Activated CD4-positive, alpha-beta T cell treated with anti-CD3 and anti-CD28 coated beads for 36 hours (primary cell): ENCODE measurements at regions of chr14 and their contacts with region 1.

Region 1: GRCh38 chr14:23301288-23301968 is 1.2 kb downstream of the PPP1R3E start:
- DNase-seq: peak; percentile 99
- ATAC-seq: peak; percentile 84
- H3K4me3 Mint-ChIP-seq: peak overlapping the region; percentile 100
- H3K27ac Mint-ChIP-seq: peak overlapping the region; percentile 94
- H3K4me1 Mint-ChIP-seq: peaks cover 18% of the 10 kb centered on the region
- H3K27me3 Mint-ChIP-seq: peaks cover 10% of the 10 kb centered on the region

Region 2: DNA sequence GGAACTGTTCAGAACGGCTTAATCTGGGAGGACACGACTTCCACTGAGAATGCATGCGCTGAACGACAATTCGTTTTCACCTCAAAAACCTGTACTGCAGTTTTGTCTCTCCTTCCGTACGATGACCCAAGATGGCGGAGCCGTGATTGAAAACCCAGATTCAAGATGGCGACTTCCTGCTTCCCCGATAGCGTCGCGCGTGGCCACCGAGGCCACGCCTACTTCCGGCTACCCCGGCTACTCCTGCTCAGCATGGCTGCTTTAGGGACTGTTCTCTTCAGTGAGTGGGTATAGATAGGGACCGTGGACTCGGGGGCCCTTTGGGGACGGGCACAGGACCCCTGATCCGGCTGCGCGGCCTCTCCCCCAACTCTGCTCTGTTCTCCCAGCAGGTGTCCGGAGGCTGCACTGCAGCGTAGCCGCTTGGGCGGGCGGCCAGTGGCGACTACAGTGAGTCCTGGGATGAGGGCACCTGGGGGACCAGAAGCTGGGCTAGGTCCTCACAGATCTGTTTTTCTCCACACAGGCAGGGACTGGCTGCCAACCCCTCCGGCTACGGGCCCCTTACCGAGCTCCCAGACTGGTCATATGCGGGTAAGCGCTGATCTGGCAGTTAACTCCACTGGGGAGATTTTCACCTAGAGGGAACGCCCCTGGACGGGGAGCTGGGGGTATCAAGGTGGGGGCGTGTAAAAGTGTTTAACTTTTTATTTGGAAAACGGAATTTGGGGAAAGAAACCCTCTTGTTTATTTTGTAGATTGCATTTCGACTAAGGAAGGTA is 471.6 kb before region 1 on chr14 and contains the start of gene MRPL52:
- CTCF ChIA-PET with region 1: no interaction called
- POLR2A ChIA-PET with region 1: no interaction called
- intact Hi-C with region 1: loop called in 1 of 2 experiments (anchors 5 kb)
- DNase-seq: peak; percentile 94
- ATAC-seq: peak; percentile 92
- H3K4me3 Mint-ChIP-seq: peak within 1 kb of the TSS; percentile 82
- H3K27ac Mint-ChIP-seq: peak within 1 kb of the TSS; percentile 98
- H3K4me1 Mint-ChIP-seq: peaks cover 26% of the 10 kb centered on the region
- H3K27me3 Mint-ChIP-seq: no peaks in the 10 kb centered on the region
- total RNA-seq, gene MRPL52: 115 to 136 TPM

Region 3: DNA sequence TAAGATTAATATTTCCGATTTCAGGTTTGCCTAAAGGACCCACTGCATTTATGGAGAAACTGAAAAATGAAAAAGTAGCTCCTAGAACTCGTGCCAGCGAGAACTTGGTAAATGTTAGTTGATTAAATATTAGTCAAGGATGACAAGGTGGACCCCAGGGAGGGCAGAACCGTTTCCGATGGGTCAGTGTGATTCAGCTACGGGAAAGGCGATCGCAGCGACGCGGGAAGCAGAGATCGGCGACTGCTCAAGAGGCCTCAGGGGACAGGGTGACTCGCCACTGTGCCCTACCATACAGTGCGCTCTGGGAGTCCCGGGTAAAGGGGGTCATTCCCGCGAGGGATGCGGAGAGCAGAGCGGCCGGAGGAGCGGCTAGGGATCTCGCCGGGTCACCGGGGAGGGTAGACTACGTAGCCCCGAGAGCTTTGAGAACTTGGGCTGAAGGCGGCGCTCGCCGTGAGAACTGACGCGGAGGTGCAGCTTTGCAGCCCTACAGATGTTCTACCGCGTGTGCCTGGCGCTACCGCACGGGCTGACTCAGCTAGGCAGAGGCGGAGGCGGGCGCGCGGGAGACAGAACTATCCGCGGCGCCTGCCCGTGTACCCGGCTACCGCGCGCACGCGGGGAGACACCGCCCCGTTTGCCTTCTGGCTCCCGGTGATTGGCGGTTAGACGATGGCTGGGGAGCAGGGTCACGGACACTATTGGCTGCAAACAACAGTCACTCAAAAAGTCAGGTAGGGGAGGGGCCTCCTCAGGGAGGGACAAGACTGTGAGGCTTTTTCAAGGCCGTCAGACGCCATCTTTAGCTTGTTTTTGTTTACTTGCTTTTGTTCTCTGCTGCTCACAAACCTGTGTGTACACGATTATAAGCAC is 294.6 kb before region 1 on chr14:
- CTCF ChIA-PET with region 1: no interaction called
- POLR2A ChIA-PET with region 1: no interaction called
- intact Hi-C with region 1: loop called in 1 of 2 experiments (anchors 1 kb)
- DNase-seq: peak; percentile 98
- ATAC-seq: peak; percentile 98
- H3K4me3 Mint-ChIP-seq: peak overlapping the region; percentile 95
- H3K27ac Mint-ChIP-seq: peak overlapping the region; percentile 99
- H3K4me1 Mint-ChIP-seq: peaks cover 45% of the 10 kb centered on the region
- H3K27me3 Mint-ChIP-seq: no peaks in the 10 kb centered on the region

Region 4: GRCh38 chr14:23237772-23238594 is 63.4 kb before region 1 on chr14 and contains the start of gene RNF212B:
- CTCF ChIA-PET with region 1: no interaction called
- POLR2A ChIA-PET with region 1: no interaction called
- intact Hi-C with region 1: loop called in 1 of 2 experiments (anchors 1 kb)
- DNase-seq: peak; percentile 95
- ATAC-seq: peak; percentile 99
- H3K4me3 Mint-ChIP-seq: peak within 1 kb of the TSS; percentile 29
- H3K27ac Mint-ChIP-seq: no peak within 1 kb of the TSS
- H3K4me1 Mint-ChIP-seq: peaks cover 3% of the 10 kb centered on the region
- H3K27me3 Mint-ChIP-seq: peaks cover 20% of the 10 kb centered on the region
- total RNA-seq, gene RNF212B: not detected

Region 5: GRCh38 chr14:23327947-23328744 is 26.7 kb after region 1 on chr14:
- CTCF ChIA-PET with region 1: interaction called, 173 read pairs
- POLR2A ChIA-PET with region 1: interaction called, 93 read pairs
- intact Hi-C with region 1: no loop called
- DNase-seq: peak; percentile 82
- ATAC-seq: peak; percentile 92
- H3K4me3 Mint-ChIP-seq: no peak overlapping the region
- H3K27ac Mint-ChIP-seq: no peak overlapping the region
- H3K4me1 Mint-ChIP-seq: peaks cover 6% of the 10 kb centered on the region
- H3K27me3 Mint-ChIP-seq: no peaks in the 10 kb centered on the region

Region 6: DNA sequence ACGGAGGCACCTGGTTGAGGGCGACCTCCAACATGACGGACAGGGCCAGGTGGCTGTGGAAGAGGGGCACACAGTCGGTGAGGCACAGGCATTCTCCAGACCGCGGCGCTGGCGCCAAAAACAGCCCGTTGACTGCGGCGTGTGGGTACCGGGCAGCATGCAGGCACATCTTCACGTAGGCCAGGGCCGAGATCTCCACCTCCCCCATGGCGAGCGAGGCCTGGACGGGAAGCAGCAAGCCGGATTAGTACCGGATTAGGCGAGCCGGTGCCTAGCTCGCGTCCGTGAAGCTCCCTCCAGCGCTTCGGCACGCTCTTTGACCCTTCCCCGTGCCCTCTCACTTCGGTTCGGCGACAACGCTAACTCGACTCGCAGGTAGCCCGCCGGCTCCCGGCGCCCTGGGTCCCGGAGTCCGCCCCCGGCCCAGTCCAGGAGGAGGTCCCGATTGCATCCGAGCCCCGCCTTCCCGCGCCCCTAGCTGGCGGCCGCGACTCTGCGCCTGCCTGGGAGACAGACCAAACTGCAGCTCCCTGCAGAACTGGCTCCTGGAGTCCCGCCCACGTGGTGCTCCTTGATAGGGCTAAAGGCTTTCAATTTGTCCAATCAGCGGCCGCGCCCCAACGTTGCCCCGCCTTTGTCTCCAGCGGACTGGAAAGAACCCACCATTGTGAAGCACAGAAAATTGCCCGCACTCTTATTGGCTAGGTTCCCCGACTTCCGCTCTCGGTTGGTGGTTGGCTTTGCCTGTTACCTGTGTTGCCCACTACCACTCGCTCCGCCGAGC is 839.9 kb after region 1 on chr14 and contains the start of gene EMC9:
- CTCF ChIA-PET with region 1: no interaction called
- POLR2A ChIA-PET with region 1: no interaction called
- intact Hi-C with region 1: loop called in 1 of 2 experiments (anchors 2 kb)
- DNase-seq: peak; percentile 100
- ATAC-seq: peak; percentile 87
- H3K4me3 Mint-ChIP-seq: peak within 1 kb of the TSS; percentile 88
- H3K27ac Mint-ChIP-seq: peak within 1 kb of the TSS; percentile 97
- H3K4me1 Mint-ChIP-seq: peaks cover 66% of the 10 kb centered on the region
- H3K27me3 Mint-ChIP-seq: no peaks in the 10 kb centered on the region
- total RNA-seq, gene EMC9: 36.9 to 46.7 TPM